RWPE1 (cell line): ENCODE measurements at regions of chr2 and their contacts with region 1.

Region 1: DNA sequence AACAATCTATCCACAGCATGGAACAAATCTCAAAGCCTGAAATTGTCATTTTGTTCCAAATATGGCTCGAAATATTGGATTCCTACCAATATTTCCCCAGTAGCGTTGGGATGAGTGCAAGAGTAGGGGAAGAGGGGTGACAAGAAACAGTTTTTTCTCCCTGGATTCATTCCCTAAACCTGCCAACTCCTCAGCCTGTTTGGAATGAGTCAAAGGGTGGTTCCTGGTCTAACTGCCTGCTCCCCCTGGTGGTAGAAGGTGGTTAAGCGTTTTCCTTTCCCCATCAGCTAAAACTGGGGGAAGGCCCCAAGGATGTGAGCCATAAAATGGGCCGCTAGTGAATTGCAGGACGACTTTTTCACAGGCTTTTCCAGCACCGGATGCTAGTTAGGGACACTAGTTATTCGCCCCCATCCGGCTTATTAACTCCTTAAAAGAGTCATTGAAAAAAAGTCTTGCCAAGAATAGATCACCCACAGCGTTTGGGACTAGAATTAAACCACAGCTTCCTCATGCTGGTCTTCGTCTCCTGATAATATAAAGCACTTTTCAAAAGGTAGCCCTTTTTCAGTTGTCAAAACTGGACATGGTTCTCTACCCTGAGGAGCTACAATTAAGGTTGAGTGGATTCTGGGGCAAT is 72.5 kb downstream of the DHRS9 start:
- DNase-seq: peak; percentile 64
- H3K27ac ChIP-seq: no peak overlapping the region
- CTCF ChIP-seq: peak; percentile 84

Region 2: GRCh38 chr2:167929484-167929883 is 1212.3 kb before region 1 on chr2:
- CTCF ChIA-PET with region 1: no interaction called
- POLR2A ChIA-PET with region 1: no interaction called
- DNase-seq: no peak
- H3K27ac ChIP-seq: no peak overlapping the region
- CTCF ChIP-seq: no peak

Region 3: GRCh38 chr2:169109502-169110409 is 32.1 kb before region 1 on chr2:
- CTCF ChIA-PET with region 1: interaction called, 24 read pairs
- POLR2A ChIA-PET with region 1: no interaction called
- DNase-seq: peak; percentile 86
- H3K27ac ChIP-seq: no peak overlapping the region
- CTCF ChIP-seq: peak; percentile 82

Region 4: DNA sequence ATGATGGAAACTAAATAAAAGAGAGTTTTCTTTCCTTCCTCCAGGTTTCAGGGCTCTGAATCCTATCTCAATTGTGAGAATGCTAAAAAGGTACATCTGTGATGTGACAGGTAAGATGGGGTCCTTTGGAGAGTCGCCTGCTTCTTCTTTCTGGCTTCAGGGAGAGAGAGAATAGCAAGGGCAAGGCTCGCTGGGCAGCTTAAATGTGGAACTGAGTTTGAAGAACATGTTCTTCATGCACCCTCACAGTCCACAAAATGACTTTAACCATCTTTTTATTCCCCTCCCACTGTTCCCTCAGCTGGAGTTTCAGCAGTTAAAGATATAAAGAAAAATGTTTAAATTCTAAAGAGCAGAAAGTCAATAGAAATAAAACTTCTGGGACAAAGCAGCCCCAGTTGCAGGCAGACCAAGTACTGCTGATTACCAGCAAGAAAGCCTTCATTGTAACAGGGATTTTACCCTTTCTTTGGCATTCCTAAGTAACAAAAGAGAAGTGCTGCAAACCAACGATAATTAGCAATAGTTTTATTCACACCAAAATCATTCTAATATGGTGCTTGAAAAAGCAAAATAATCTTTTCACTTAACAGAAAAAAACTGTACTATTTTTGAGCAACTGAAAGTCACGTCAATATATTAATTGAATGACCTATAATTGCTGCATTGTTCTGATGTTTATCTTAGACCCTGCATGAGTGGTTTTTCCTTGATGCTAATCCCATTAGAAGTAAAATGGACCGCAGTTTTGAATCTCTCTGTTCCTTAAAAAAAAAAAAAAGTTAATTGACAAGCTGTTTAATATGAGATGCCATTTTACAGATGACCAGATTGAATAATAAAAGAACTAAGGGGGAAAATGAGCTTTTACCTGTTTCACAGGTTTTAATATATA is 159.1 kb after region 1 on chr2:
- CTCF ChIA-PET with region 1: no interaction called
- POLR2A ChIA-PET with region 1: no interaction called
- DNase-seq: no peak
- H3K27ac ChIP-seq: no peak overlapping the region
- CTCF ChIP-seq: no peak

Region 5: GRCh38 chr2:169397697-169398096 is 255.9 kb after region 1 on chr2:
- CTCF ChIA-PET with region 1: interaction called, 10 read pairs
- POLR2A ChIA-PET with region 1: no interaction called
- DNase-seq: peak; percentile 39
- H3K27ac ChIP-seq: no peak overlapping the region
- CTCF ChIP-seq: 0 out of 2 replicates have a peak, but pooled peaks have one; percentile 22

Region 6: DNA sequence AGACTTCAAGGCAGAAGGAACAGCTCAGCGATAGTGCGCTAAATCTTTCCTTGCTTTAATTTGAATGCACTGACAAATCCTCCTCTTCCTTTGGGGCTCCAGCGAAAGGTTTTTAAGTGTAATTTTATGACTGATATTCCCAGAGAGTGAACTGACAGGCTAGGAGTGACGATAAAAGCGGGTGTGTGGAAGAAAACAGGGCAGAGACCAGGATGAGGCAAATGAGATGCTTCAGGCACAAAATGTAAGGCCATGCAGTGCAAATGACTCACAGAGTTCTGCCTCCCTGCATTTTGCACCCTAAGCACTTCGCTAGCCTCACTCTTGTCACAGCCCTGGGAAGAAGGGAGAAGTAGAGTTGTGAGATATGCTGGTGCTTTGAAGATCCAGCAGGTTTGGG is 606.5 kb after region 1 on chr2:
- CTCF ChIA-PET with region 1: no interaction called
- POLR2A ChIA-PET with region 1: no interaction called
- DNase-seq: no peak
- H3K27ac ChIP-seq: no peak overlapping the region
- CTCF ChIP-seq: no peak